ENCODE measurements at regions of chr12 and their contacts with region 1.

Region 1: DNA sequence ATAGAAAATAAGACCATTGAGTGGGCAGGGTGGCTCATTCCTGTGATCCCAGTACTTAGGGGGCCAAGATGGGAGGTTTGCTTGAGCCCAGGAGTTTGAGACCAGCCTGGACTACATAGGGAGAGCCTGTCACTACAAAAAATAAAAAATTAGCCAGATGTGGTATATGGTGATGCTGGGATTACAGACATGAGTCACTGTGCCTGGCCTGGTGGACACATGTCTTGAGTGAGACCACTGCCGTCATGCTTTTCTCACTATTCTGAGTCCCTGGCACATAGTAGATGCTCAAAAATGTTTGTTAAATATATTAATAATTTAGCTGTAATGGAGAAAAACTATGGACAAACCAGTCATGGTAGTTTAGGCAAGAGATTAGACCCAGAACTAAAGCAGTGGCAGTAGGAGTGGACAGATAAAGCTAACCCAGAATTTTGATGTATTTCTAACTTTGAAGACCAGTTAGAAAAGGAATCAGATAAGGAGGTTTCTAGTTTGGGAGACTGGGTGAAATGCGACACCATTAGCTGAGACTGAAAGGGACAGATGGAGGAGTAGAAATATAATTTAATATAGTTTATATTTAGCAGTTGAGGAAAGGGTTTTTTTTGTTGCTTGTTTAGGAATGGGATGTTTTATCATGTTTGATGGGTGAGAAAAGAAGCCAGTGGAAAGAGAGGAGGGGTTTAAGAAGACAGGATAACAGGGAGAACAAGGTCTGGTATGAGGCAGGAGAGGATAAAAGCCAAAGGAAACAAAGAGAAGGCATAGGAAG is 7.4 kb upstream of the PTGES3 start:
- DNase-seq: no peak
- H3K4me3 ChIP-seq: no peak overlapping the region
- H3K27ac ChIP-seq: no peak overlapping the region
- H3K4me1 ChIP-seq: peaks cover 0 to 16% (median under 1%) of the 10 kb centered on the region in 6 donors
- H3K27me3 ChIP-seq: no peaks in the 10 kb centered on the region
- CTCF ChIP-seq: no peak
- POLR2A ChIP-seq: no peak

Region 2: DNA sequence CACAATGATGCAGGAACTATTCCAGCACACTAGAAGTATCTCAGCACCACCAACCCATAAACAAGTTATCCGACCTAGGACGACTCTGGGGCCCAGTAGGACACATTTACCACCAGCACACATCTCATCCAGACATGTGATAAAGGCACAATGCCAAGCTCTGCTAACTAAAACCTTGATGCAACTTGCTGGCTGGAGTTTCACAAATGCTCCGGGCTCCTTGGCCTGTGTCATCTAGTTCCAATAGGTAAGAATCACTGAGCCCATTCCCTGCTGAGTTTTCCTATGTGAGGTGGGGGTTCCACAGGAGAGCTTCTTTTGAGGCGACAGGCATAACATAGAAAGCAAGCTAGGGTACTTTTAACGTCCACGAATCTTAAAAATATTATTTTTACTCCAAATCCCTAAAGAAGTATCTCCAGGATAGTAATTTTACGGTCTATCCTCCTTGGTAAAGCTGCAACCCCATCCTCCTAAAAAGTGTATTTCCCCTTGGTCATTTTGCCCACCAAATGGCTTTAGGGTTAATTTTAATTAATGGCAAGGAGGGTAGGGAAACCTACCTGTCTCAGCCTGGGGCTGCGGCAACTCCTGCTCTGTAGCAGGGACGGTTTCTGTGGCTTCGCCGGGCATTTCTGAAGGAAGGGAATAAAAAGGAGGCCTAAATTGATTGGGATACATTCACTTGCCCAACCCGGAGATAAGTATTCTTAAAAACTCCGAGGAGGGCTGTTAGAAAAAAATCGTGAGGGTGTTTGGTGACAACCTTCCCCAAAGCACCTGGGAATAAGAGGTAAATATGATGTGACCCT is 28.6 kb after region 1 on chr12:
- intact Hi-C with region 1: loop called (anchors 2 kb)
- DNase-seq: no peak
- H3K4me3 ChIP-seq: peak overlapping the region; percentile 64 to 98 (median 76)
- H3K27ac ChIP-seq: peak overlapping the region; percentile 93 to 98 (median 95)
- H3K4me1 ChIP-seq: peaks cover 44 to 67% (median 58%) of the 10 kb centered on the region in 6 donors
- H3K27me3 ChIP-seq: no peaks in the 10 kb centered on the region
- CTCF ChIP-seq: no peak
- POLR2A ChIP-seq: no peak

Measured in spleen (tissue), 13 donors.